ENCODE measurements at regions of chr6 and their contacts with region 1.

Region 1: DNA sequence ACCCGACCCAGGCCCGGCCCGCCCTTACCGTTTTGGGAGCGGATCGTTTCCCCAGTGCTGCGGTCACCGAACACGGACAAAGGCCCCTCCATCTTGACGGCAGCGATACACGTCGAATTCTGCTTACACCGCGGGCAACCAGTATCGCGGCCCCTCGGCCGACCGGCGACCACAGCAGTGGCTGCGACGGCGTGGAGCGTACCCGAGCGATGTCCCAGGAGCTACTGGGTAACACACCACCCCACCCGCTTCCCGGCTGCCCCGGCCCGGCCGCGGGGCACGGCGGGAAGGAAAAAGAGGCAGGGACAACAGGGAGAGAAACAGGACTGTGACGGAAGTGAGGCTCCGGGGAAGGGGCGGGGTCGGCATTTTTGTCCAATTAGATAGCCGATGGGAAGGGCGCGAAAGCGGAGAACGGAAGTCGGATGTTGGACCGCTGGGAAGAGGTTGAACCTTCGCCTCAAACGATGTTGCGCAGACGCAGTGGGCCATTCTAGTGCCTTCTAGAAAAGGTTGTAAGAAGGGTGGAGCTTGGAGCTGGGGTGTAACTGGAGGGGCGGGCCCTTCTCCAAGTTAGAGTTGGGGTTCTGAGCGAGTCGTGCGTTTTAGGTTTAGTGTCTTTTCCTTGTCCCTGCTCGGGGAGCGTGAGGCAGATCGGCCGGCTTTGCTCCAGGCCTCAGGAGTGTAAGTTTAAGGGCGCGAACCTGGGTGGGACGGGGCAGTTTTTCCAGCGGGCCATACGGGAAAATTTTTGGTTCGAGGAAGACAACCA is at the start of gene TCP1:
- DNase-seq: peak; percentile 99
- ATAC-seq: peak; percentile 85
- H3K4me3 ChIP-seq: peak within 1 kb of the TSS; percentile 92 to 97
- H3K27ac ChIP-seq: peak within 1 kb of the TSS; percentile 88
- H3K4me1 ChIP-seq: peaks cover 11 to 20% of the 10 kb centered on the region in 2 experiments; a peak in 3 of 4 replicates
- H3K27me3 ChIP-seq: no peaks in the 10 kb centered on the region
- CTCF ChIP-seq: no peak
- POLR2A ChIP-seq: peak; percentile 96
- RAD21 ChIP-seq: no peak
- total RNA-seq, gene TCP1: 447 TPM

Region 2: DNA sequence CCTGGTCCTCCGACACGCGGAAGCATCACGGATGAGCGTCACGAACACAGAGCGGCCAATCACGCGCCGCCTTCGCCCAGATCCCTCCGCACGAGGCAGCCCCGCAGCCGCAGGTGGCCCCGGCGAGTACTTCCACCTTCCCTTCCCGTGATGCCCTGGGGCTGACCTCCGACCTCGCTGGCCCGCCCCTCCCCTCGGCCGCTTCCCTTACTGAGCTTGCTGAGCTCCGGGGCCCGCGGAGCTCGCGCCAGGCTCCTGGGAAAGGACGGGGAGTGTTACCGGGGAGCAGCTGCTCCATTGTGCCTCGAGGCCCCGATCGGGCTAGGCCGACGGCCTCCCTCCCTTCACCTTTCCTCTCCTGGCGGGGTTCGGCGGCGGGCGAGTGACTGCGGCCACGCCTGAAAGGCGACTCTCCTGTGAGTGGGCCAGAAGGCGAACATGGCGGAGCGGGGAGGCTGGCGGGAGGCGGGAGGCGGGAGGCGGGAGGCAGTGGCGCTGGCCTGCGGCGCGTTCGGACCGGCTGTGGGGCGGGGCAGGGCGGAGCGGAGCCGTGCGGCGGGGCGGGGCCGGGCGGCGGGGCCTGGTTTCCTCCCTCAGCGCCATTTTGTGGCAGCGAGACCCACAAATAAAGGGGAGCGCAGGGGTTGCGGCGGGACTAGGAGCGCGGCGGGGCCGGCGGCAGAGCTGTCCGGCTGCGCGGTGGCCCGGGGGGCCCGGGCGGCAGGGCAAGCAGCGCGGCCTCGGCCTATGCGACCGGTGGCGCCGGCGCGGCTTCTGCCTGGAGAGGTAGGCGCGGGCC is 62.4 kb before region 1 on chr6 and contains the start of gene WTAP:
- CTCF ChIA-PET with region 1: no interaction called
- POLR2A ChIA-PET with region 1: interaction called, 20 read pairs
- RAD21 ChIA-PET with region 1: no interaction called
- intact Hi-C with region 1: loop called (anchors 1 kb)
- DNase-seq: peak; percentile 94
- ATAC-seq: peak; percentile 87
- H3K4me3 ChIP-seq: peak within 1 kb of the TSS; percentile 81 to 89
- H3K27ac ChIP-seq: peak within 1 kb of the TSS; percentile 98
- H3K4me1 ChIP-seq: peaks cover 8 to 31% of the 10 kb centered on the region in 2 experiments; a peak in 3 of 4 replicates
- H3K27me3 ChIP-seq: no peaks in the 10 kb centered on the region
- CTCF ChIP-seq: no peak
- POLR2A ChIP-seq: peak; percentile 87
- RAD21 ChIP-seq: no peak
- total RNA-seq, gene WTAP: 88.6 TPM

Region 3: GRCh38 chr6:159761873-159762680 is 27.5 kb before region 1 on chr6 and contains the start of gene ACAT2:
- CTCF ChIA-PET with region 1: no interaction called
- POLR2A ChIA-PET with region 1: interaction called, 11 read pairs
- RAD21 ChIA-PET with region 1: no interaction called
- intact Hi-C with region 1: loop called (anchors 2 kb)
- DNase-seq: peak; percentile 83
- ATAC-seq: peak; percentile 96
- H3K4me3 ChIP-seq: peak within 1 kb of the TSS; percentile 69 to 71
- H3K27ac ChIP-seq: peak within 1 kb of the TSS; percentile 96
- H3K4me1 ChIP-seq: peaks cover 4 to 47% of the 10 kb centered on the region in 2 experiments; a peak in 3 of 4 replicates
- H3K27me3 ChIP-seq: no peaks in the 10 kb centered on the region
- CTCF ChIP-seq: no peak
- POLR2A ChIP-seq: peak; percentile 40
- RAD21 ChIP-seq: no peak
- total RNA-seq, gene ACAT2: 41.6 TPM

Region 4: GRCh38 chr6:159968440-159969203 is 179.1 kb after region 1 on chr6 and contains the start of gene IGF2R:
- CTCF ChIA-PET with region 1: no interaction called
- POLR2A ChIA-PET with region 1: interaction called, 3 read pairs
- RAD21 ChIA-PET with region 1: no interaction called
- intact Hi-C with region 1: loop called (anchors 5 kb)
- DNase-seq: peak; percentile 62
- ATAC-seq: peak; percentile 92
- H3K4me3 ChIP-seq: peak within 1 kb of the TSS; percentile 64 to 76
- H3K27ac ChIP-seq: peak within 1 kb of the TSS; percentile 65
- H3K4me1 ChIP-seq: peaks cover 8 to 20% of the 10 kb centered on the region in 2 experiments; a peak in 2 of 4 replicates
- H3K27me3 ChIP-seq: peaks cover 4% of the 10 kb centered on the region; the same call in 1 of the 2 replicates
- CTCF ChIP-seq: no peak
- POLR2A ChIP-seq: peak; percentile 74
- RAD21 ChIP-seq: no peak
- total RNA-seq, gene IGF2R: 37.0 TPM

Region 5: GRCh38 chr6:160005861-160006540 is 216.4 kb after region 1 on chr6:
- CTCF ChIA-PET with region 1: no interaction called
- POLR2A ChIA-PET with region 1: no interaction called
- RAD21 ChIA-PET with region 1: no interaction called
- intact Hi-C with region 1: no loop called
- DNase-seq: no peak
- ATAC-seq: no peak
- H3K4me3 ChIP-seq: no peak overlapping the region
- H3K27ac ChIP-seq: no peak overlapping the region
- H3K4me1 ChIP-seq: no peaks in the 10 kb centered on the region
- H3K27me3 ChIP-seq: no peaks in the 10 kb centered on the region
- CTCF ChIP-seq: no peak
- POLR2A ChIP-seq: no peak
- RAD21 ChIP-seq: no peak

Measured in HCT116 (cell line).